ENCODE measurements at regions of chr3 and their contacts with region 1.

Region 1: DNA sequence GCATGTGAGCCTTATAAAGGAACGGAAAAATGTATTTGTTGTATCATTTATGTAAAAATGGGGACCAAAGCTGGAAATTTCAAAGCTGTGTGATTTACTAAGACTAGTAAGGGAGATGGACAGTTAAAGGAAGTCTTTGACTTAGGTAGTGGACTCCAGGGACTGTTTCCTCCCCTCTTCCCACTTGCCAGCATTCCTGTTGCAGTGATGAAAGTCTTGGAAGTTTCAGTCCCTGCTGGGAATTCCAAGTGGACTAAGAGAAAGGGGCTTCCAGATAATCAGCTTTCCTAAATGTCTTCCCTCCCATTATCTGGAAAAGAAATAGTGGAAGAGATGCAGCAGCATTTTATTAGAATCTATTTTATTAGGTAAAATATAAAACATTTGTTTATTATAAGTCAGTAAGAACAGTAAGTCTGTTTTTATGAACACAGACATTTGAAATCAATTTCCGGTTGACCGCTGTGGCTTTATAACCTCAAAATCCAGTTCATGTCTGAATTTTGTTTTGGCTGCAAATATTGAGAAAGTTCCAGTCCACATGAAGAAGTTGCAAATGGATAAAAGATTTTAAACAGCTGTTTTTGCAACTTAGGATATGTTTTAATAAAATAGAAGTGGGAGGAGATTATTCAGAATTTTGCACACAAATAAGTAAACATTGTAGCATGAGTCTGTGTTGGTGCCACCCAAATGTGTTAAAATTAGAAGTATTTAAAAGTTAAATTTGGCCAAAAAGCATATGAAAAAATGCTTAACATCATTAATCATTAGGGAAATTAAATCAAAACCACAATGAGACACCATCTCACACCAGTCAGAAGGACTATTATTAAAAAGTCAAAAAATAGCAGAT is 141.8 kb downstream of the IL20RB start:
- DNase-seq: no peak
- H3K4me3 ChIP-seq: no peak overlapping the region
- CTCF ChIP-seq: no peak

Region 2: GRCh38 chr3:136804813-136805212 is 294.8 kb before region 1 on chr3:
- CTCF ChIA-PET with region 1: no interaction called
- POLR2A ChIA-PET with region 1: no interaction called
- DNase-seq: no peak
- H3K4me3 ChIP-seq: no peak overlapping the region
- CTCF ChIP-seq: no peak

Region 3: GRCh38 chr3:137110484-137110883 is 10.9 kb after region 1 on chr3:
- CTCF ChIA-PET with region 1: interaction called, 24 read pairs
- POLR2A ChIA-PET with region 1: no interaction called
- DNase-seq: no peak
- H3K4me3 ChIP-seq: no peak overlapping the region
- CTCF ChIP-seq: peak; percentile 75